ENCODE measurements at regions of chr11 and their contacts with region 1.

Region 1: DNA sequence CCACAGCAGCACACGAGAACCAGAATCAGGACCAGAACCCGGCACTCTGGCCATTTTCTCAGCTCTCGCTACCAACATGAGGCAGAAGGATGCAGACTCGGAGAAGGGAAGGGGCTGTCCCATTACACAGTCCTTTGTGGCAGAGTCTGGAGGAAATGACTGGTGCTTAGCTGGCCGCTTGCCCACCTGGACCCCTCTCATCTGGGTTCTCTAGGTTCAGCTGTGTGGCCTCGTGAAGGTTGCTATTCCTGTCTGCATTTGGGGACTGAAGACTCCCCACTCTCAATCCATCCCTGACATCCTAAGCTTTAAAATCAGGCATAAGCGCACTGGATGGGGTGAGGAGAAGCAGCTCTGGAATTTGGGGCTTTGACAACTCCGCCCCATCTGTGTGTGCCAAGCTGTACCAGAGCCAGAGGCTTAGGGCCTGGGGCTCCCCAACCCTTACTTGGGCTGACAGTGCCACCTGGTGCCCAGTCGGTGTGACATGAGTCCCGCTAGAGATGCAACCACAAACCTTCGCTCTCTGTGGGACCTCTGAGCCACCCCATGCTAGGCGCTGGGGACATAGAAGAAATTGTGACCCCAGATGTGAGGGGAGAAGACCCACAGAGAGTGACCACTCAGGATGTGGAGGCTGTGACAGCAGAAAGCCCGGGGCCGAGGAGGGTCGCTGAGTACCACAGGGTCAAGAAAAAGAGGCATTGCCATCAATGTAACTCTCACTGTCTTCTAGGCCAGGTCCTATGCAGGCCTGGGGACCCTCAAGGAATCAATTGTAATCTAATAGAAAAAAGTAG is 35.9 kb upstream of the FCHSD2 start:
- DNase-seq: peak; percentile 65 to 87 (median 80)
- ATAC-seq: peak; percentile 100
- H3K4me3 ChIP-seq: no peak overlapping the region
- H3K4me3 Mint-ChIP-seq: no peak overlapping the region
- H3K27ac ChIP-seq: no peak overlapping the region
- H3K27ac Mint-ChIP-seq: no peak overlapping the region
- H3K4me1 ChIP-seq: no peaks in the 10 kb centered on the region
- H3K4me1 Mint-ChIP-seq: peaks cover 3% of the 10 kb centered on the region
- H3K27me3 ChIP-seq: no peaks in the 10 kb centered on the region
- H3K27me3 Mint-ChIP-seq: no peaks in the 10 kb centered on the region
- CTCF ChIP-seq: peak; percentile 80

Region 2: DNA sequence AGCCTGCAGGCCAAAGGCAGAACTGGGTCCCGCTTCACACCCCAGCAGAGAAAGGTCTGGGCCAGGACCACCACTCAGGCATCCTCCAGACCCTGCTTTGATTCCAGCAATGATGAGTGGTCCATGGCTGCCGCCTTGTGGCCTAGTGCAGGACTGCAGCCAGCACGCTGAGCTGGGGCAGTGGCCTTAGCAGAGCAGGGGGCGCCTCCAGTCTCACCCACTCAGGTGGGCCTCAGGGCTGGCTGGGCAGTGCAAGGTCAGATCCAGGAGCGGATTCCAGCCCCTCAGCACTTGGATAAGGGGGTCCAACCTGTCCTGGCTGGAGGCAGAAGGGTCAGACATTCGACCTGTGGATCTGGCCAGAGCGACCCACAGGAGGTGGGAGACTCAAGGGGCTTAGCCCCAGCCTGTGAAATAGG is 494.2 kb before region 1 on chr11:
- CTCF ChIA-PET with region 1: interaction called, 7 read pairs
- POLR2A ChIA-PET with region 1: no interaction called
- intact Hi-C with region 1: loop called in 1 of 2 experiments (anchors 1 kb)
- DNase-seq: peak; percentile 48 to 80 (median 66)
- ATAC-seq: peak; percentile 82
- H3K4me3 ChIP-seq: no peak overlapping the region
- H3K4me3 Mint-ChIP-seq: no peak overlapping the region
- H3K27ac ChIP-seq: no peak overlapping the region
- H3K27ac Mint-ChIP-seq: peak overlapping the region; percentile 27
- H3K4me1 ChIP-seq: peaks cover 6% of the 10 kb centered on the region
- H3K4me1 Mint-ChIP-seq: peaks cover 15% of the 10 kb centered on the region
- H3K27me3 ChIP-seq: no peaks in the 10 kb centered on the region
- H3K27me3 Mint-ChIP-seq: no peaks in the 10 kb centered on the region
- CTCF ChIP-seq: peak; percentile 90

Region 3: DNA sequence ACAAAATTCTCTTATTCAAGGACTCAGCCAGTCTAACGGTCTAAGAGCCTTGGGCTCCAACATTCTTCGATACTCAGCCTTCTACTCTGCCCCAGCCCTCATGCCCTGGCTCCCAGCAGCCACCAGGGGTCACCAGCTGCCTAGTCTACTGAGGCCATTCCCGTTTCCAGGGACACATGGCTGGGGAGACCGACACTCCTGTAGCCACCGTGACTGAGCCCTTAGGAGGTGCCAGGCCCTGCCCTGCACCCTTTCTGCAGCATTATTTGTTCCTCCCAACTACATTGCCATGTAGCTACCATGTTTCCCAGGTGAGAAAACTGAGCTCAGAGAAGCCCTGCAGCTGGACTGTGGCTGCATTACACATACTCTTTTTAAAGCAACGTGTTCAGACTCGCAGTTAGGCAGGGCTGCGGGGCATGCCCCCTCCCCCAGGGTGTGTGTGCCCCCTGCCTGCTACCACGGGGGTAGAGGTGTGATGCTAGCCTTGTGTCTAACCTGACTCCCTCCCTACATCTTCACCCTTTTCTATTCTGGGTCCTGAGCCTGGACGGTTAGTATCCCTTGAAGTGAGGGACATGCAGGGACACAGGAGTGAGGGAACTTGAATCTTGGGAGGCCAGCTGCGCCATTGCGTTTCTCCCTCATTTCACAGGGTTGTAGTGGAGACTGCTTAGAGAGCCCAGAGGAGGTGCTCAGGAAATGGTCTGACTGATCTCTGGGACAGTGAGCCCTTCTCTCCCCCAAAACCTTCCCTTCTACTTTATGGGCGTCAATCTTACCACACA is 346.3 kb before region 1 on chr11:
- CTCF ChIA-PET with region 1: interaction called, 41 read pairs
- POLR2A ChIA-PET with region 1: no interaction called
- intact Hi-C with region 1: loop called in 1 of 2 experiments (anchors 1 kb)
- DNase-seq: peak in 8 of 9 experiments; percentile 34 to 70 (median 58)
- ATAC-seq: peak; percentile 69
- H3K4me3 ChIP-seq: no peak overlapping the region
- H3K4me3 Mint-ChIP-seq: no peak overlapping the region
- H3K27ac ChIP-seq: peak overlapping the region in 1 of 2 experiments; percentile 48
- H3K27ac Mint-ChIP-seq: peak overlapping the region; percentile 60
- H3K4me1 ChIP-seq: no peaks in the 10 kb centered on the region
- H3K4me1 Mint-ChIP-seq: no peaks in the 10 kb centered on the region
- H3K27me3 ChIP-seq: no peaks in the 10 kb centered on the region
- H3K27me3 Mint-ChIP-seq: no peaks in the 10 kb centered on the region
- CTCF ChIP-seq: peak; percentile 52

Region 4: GRCh38 chr11:72924568-72925190 is 253.3 kb before region 1 on chr11:
- CTCF ChIA-PET with region 1: interaction called, 93 read pairs
- POLR2A ChIA-PET with region 1: interaction called, 8 read pairs
- intact Hi-C with region 1: loop called in 1 of 2 experiments (anchors 1 kb)
- DNase-seq: peak in 2 of 9 experiments; percentile 41 to 57
- ATAC-seq: no peak
- H3K4me3 ChIP-seq: no peak overlapping the region
- H3K4me3 Mint-ChIP-seq: no peak overlapping the region
- H3K27ac ChIP-seq: no peak overlapping the region
- H3K27ac Mint-ChIP-seq: no peak overlapping the region
- H3K4me1 ChIP-seq: peaks cover 3% of the 10 kb centered on the region
- H3K4me1 Mint-ChIP-seq: peaks cover 5% of the 10 kb centered on the region
- H3K27me3 ChIP-seq: no peaks in the 10 kb centered on the region
- H3K27me3 Mint-ChIP-seq: no peaks in the 10 kb centered on the region
- CTCF ChIP-seq: peak; percentile 42

Region 5: GRCh38 chr11:73198677-73199076 is 20.7 kb after region 1 on chr11:
- CTCF ChIA-PET with region 1: no interaction called
- POLR2A ChIA-PET with region 1: no interaction called
- intact Hi-C with region 1: no loop called
- DNase-seq: no peak
- ATAC-seq: no peak
- H3K4me3 ChIP-seq: no peak overlapping the region
- H3K4me3 Mint-ChIP-seq: no peak overlapping the region
- H3K27ac ChIP-seq: no peak overlapping the region
- H3K27ac Mint-ChIP-seq: no peak overlapping the region
- H3K4me1 ChIP-seq: no peaks in the 10 kb centered on the region
- H3K4me1 Mint-ChIP-seq: no peaks in the 10 kb centered on the region
- H3K27me3 ChIP-seq: no peaks in the 10 kb centered on the region
- H3K27me3 Mint-ChIP-seq: peaks cover 5% of the 10 kb centered on the region
- CTCF ChIP-seq: no peak

Region 6: DNA sequence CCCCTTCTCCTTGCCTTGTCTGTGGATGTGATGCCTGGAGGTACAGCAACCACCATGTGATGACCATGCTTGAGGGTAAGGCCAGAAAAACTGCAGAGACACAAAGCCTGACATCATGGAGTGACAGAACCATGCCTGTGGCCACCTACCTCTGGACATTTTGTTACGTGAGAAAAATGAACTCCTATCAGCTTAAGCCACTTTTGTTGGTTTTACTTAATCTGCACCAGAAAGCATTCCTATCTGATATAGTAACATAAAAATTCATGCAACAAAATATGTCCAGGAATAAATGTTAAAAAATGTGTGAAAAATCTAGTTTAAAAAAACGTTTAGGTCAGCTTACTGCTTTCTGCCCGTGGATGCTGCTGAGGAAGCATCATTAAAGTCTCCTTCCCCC is 1176.1 kb after region 1 on chr11:
- CTCF ChIA-PET with region 1: no interaction called
- POLR2A ChIA-PET with region 1: no interaction called
- intact Hi-C with region 1: no loop called
- DNase-seq: no peak
- ATAC-seq: no peak
- H3K4me3 ChIP-seq: no peak overlapping the region
- H3K4me3 Mint-ChIP-seq: no peak overlapping the region
- H3K27ac ChIP-seq: no peak overlapping the region
- H3K27ac Mint-ChIP-seq: no peak overlapping the region
- H3K4me1 ChIP-seq: no peaks in the 10 kb centered on the region
- H3K4me1 Mint-ChIP-seq: no peaks in the 10 kb centered on the region
- H3K27me3 ChIP-seq: no peaks in the 10 kb centered on the region
- H3K27me3 Mint-ChIP-seq: no peaks in the 10 kb centered on the region
- CTCF ChIP-seq: no peak

Measured in CD8-positive, alpha-beta T cell (primary cell).